ENCODE measurements at regions of chr2 and their contacts with region 1.

Region 1: GRCh38 chr2:30072250-30072842 is 74.5 kb upstream of the YPEL5 start:
- DNase-seq: peak; percentile 84
- H3K4me3 Mint-ChIP-seq: no peak overlapping the region
- H3K27ac Mint-ChIP-seq: no peak overlapping the region
- H3K4me1 Mint-ChIP-seq: no peaks in the 10 kb centered on the region
- H3K27me3 Mint-ChIP-seq: peaks cover 9% of the 10 kb centered on the region

Region 2: GRCh38 chr2:28958689-28959088 is 1113.7 kb before region 1 on chr2:
- CTCF ChIA-PET with region 1: no interaction called
- intact Hi-C with region 1: loop called (anchors 2 kb)
- DNase-seq: peak; percentile 39
- H3K4me3 Mint-ChIP-seq: no peak overlapping the region
- H3K27ac Mint-ChIP-seq: no peak overlapping the region
- H3K4me1 Mint-ChIP-seq: no peaks in the 10 kb centered on the region
- H3K27me3 Mint-ChIP-seq: no peaks in the 10 kb centered on the region

Region 3: DNA sequence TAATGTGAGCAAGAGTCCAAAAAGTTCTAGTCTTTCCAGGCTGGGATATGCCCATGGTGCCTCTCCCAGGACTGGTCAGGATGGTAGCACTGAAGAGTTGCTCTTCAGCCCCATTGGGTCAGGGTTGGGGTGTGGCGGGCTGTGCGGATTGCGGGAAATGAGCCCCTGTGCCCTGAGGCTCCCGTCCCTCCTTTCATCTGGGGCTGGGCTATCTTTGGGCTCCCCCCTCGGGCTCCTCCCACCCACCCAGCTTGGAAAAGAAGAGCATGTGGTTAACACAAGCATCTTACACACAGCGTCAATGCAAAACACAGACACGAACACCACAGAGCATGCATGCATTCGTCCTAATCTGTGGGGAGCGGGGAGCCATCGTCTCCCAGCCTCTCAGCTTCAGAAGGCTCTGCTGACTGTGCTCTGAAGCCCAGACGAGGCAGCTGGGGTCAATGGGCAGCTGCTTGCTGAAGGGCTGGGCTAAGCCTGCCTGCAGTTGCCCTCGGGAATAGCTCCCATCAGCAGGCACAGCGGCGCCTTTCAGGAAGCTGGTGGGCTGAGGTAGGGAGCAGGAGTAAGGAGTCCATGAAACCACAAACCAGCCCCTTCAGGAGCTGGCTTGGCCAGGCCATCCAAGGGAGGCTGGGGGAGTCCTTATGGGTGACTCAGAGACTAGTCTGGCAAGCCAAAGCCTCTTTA is 844.3 kb before region 1 on chr2:
- CTCF ChIA-PET with region 1: no interaction called
- intact Hi-C with region 1: no loop called
- DNase-seq: no peak
- H3K4me3 Mint-ChIP-seq: no peak overlapping the region
- H3K27ac Mint-ChIP-seq: no peak overlapping the region
- H3K4me1 Mint-ChIP-seq: no peaks in the 10 kb centered on the region
- H3K27me3 Mint-ChIP-seq: peaks cover 7% of the 10 kb centered on the region

Region 4: GRCh38 chr2:29528891-29529520 is 543.3 kb before region 1 on chr2:
- CTCF ChIA-PET with region 1: no interaction called
- intact Hi-C with region 1: no loop called
- DNase-seq: peak; percentile 45
- H3K4me3 Mint-ChIP-seq: no peak overlapping the region
- H3K27ac Mint-ChIP-seq: no peak overlapping the region
- H3K4me1 Mint-ChIP-seq: peaks cover 5% of the 10 kb centered on the region
- H3K27me3 Mint-ChIP-seq: peaks cover 20% of the 10 kb centered on the region

Region 5: GRCh38 chr2:29841386-29842004 is 230.9 kb before region 1 on chr2:
- CTCF ChIA-PET with region 1: no interaction called
- intact Hi-C with region 1: loop called (anchors 5 kb)
- DNase-seq: peak; percentile 40
- H3K4me3 Mint-ChIP-seq: no peak overlapping the region
- H3K27ac Mint-ChIP-seq: no peak overlapping the region
- H3K4me1 Mint-ChIP-seq: no peaks in the 10 kb centered on the region
- H3K27me3 Mint-ChIP-seq: peaks cover 5% of the 10 kb centered on the region

Region 6: GRCh38 chr2:29923110-29923721 is 149.1 kb before region 1 on chr2:
- CTCF ChIA-PET with region 1: interaction called, 17 read pairs
- intact Hi-C with region 1: loop called (anchors 1 kb)
- DNase-seq: peak; percentile 72
- H3K4me3 Mint-ChIP-seq: no peak overlapping the region
- H3K27ac Mint-ChIP-seq: no peak overlapping the region
- H3K4me1 Mint-ChIP-seq: peaks cover 13% of the 10 kb centered on the region
- H3K27me3 Mint-ChIP-seq: peaks cover 52% of the 10 kb centered on the region

Region 7: GRCh38 chr2:30026087-30027055 is 46.0 kb before region 1 on chr2:
- CTCF ChIA-PET with region 1: interaction called, 6 read pairs
- intact Hi-C with region 1: loop called (anchors 2 kb)
- DNase-seq: peak; percentile 14
- H3K4me3 Mint-ChIP-seq: no peak overlapping the region
- H3K27ac Mint-ChIP-seq: no peak overlapping the region
- H3K4me1 Mint-ChIP-seq: no peaks in the 10 kb centered on the region
- H3K27me3 Mint-ChIP-seq: peaks cover 5% of the 10 kb centered on the region

Measured in activated naive CD4-positive, alpha-beta T cell treated with anti-CD3 and anti-CD28 coated beads for 36 hours (primary cell).